ENCODE measurements at regions of chr1 and their contacts with region 1.

Region 1: DNA sequence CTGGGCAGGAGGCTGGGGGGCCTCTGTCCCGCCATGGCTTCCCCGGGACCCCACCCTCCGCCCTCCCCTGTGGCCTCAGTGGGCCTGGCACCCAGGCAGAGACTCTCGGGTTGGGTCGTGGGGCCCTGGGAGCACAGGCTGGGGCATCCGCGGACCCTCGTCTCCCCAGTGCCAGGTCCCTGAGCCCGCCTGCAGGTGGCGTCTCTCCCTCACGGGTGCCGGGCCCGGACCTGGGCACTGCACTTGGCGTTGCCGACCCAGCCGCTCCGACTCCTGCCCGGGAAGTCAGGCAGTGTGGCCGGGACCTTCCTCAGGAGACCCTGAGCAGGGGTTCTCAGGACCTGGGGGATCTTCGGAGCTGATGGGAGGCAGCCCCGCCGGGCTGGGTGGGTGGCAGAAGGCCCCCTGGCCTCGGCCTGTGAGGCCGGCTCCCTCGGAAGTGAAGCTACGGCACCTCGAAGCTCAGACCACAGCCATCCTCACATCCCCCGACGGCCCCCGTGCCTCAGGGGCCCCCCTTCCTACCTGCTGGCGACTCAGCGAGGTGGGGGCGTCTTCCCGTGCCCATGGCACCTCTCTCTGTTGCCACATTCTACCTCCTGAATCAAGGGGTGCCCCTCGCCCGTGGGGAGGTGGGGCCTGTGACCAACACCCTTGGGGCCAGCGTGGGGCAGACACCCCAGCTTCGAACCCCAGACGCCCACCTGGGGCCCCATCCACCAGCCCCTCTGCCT is 6.4 kb upstream of the C1orf159 start:
- DNase-seq: peak; percentile 79
- H3K27ac ChIP-seq: no peak overlapping the region
- CTCF ChIP-seq: peak; percentile 88

Region 2: GRCh38 chr1:1098681-1099421 is 23.4 kb before region 1 on chr1:
- CTCF ChIA-PET with region 1: interaction called, 10 read pairs
- POLR2A ChIA-PET with region 1: no interaction called
- DNase-seq: no peak
- H3K27ac ChIP-seq: no peak overlapping the region
- CTCF ChIP-seq: no peak

Region 3: DNA sequence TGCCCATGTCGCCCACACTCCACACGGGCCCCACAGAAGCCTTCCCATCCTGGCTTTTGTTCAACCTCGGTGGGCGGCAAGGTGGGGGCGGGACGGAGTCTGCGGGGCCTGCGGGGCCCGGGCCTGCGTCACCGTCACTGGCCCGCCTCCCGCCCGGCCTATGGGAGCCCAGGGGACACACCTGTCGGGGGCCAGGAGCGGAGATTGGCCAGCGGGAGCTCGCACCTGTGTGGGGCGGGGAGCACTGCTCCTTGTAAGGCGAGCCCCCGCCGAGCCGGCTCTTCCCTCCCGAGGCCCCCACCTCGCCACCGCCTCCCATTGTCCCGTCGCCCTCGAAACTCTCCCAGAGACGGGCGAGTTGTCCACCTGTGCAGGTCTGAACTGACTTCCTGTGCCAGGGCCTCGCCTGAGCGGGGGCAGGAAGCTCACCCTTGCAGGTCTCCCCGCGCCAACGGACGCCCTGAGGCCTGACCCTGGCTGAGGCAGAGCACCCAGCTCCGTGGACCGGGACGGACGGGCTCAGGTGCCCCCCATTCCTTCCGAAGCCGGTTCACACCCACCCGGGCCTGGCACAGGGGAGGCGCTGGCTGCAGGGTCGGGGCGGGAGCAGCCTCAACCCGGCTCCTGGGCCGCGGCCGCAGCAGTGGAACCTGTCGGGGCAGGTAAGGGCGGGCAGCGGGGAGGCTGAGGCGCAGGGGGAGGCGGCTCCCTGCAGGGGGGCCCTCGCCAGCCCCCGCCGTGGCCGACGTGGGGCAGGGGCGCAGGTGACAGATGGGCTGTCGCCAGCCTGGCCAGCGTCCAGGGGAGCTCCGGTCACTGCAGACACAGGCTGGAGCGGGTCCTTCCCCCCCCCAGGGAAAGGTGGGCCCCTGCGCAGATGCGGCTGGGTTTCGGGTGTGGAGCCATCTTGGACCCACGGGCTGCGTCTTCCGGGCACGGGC is 40.6 kb after region 1 on chr1:
- CTCF ChIA-PET with region 1: interaction called, 26 read pairs
- POLR2A ChIA-PET with region 1: no interaction called
- DNase-seq: peak; percentile 70
- H3K27ac ChIP-seq: no peak overlapping the region
- CTCF ChIP-seq: no peak

Region 4: DNA sequence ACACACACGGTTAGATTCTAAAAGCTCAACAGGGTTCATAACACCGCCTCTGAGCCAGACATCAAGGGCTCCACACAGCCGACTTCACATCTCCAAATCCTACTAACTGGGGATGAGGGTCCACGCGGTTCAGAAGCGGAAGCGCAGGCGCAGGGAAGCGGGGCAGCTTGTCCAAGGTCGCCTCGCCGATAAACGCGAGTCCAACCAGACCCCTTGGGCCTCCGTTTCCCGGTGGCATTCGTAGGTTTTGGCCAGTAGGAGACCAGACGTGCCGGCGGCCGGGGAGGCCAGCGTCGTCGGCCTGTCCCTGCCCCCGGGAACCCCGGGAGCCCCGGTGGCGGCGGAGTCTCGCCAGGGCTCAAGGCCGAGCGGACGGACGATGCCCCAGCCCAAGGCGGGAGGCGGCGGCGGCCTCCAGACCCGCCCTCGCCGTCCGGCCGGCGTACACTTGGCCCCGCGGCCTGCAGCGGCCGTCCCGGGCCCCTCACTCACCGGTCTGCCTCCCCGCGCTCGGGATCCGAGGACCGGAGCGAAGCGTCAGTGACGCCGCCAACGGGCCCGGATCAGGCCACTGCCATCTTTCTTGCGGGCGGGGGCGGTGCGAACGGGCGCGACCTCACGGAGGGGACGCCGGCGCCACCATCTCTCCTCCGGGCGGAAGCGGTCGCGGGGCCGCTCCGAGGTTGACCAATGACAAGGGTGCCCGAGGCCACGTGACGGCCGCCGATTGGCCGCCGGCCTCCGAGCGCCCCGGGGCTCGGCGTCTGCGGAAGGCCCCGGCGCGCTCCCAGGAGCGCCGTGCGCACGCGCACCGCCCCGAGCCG is 109.4 kb after region 1 on chr1 and contains the start of gene SDF4:
- CTCF ChIA-PET with region 1: interaction called, 14 read pairs
- POLR2A ChIA-PET with region 1: no interaction called
- DNase-seq: peak; percentile 99
- H3K27ac ChIP-seq: peak within 1 kb of the TSS; percentile 81
- CTCF ChIP-seq: no peak

Region 5: DNA sequence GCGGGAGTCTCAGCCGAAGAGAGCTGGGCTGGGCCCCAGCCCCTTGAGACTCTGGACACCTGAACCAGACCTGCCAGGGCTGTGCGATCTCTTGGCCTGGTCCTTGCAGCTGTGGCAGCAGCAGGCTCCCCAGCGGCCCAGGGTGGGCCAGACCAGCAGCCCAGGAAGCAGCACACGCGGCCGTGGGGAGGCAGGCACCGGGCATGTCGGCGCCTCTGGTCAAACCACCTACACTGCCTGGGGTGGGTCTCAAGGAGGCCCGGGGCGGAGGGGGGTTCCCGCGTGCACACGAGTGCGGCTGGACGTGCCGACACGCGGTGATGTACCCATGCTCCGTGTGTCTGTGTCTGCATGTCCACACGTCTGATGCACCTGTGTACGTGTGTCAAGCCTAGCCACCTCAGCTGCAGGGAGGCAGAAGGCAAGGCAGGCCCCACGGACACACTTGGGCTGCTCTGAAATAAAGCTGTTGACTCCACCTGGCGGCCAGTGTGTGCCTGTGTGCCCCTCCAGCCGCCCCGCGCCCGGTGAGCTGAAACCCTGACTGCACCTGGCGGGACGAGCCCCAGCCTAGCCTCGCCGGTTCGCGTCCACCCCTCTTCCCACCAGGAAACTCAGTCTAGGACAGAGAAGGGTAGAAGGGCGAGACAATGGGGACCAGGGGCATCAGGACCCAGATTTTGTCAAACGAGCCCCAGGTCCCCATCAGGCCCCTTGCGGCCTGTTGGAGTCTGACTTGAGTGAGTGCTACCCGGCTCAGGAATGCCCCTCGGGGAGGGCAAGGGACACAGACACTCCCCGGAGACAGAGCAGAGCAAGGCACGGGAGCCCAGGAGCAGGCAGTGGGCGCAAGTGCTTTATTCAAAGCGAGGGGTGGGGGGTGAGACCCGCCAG is 169.6 kb after region 1 on chr1:
- CTCF ChIA-PET with region 1: interaction called, 61 read pairs
- POLR2A ChIA-PET with region 1: interaction called, 3 read pairs
- DNase-seq: peak; percentile 67
- H3K27ac ChIP-seq: peak overlapping the region; percentile 65
- CTCF ChIP-seq: peak; percentile 83

Measured in RWPE1 (cell line).